Endothelial cell of umbilical vein (primary cell): ENCODE measurements at regions of chr10 and their contacts with region 1.

Region 1: DNA sequence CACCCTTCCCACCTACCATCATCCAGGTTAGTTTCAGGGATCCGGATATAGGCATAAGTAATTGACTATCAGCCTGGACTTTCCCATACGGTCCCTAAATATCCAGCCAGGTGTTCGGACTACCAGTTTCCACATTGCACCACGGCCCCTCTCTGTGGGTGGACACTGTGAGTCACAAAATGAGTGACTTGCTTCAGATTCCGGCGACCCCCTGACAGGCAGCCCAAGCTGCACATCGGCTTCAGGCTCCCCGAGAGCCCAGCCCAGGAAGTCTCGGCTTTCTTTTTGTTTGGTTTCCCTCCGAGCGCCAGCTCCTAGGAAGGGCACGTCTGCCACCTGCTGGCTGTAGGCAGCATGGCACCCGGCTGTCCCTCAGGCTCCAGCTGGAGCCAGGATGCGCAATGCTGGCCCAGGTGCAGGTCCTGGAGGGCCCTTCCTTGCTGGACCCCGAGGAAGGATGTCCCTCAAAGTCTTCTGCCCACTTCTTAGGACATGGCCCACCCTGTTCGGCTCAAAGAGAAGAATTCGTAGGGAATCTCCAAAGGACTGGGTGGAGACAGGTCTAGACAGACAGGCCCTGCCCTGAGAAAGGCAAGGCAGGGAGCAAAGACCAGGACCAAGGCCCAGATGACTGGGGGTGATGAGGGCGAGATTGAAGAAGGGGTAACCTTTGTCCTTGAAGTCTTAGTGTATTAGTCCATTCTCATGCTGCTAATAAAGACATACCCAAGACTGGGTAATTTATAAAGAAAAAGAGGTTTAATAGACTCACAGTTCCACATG is 10.6 kb downstream of the HABP2 start:
- DNase-seq: peak; percentile 68
- H3K4me3 ChIP-seq: peak overlapping the region in 2 of 3 experiments; percentile 41
- H3K27ac ChIP-seq: no peak overlapping the region
- H3K4me1 ChIP-seq: peaks cover 8% of the 10 kb centered on the region
- H3K27me3 ChIP-seq: no peaks in the 10 kb centered on the region
- CTCF ChIP-seq: peak; percentile 97 to 99
- POLR2A ChIP-seq: no peak

Region 2: DNA sequence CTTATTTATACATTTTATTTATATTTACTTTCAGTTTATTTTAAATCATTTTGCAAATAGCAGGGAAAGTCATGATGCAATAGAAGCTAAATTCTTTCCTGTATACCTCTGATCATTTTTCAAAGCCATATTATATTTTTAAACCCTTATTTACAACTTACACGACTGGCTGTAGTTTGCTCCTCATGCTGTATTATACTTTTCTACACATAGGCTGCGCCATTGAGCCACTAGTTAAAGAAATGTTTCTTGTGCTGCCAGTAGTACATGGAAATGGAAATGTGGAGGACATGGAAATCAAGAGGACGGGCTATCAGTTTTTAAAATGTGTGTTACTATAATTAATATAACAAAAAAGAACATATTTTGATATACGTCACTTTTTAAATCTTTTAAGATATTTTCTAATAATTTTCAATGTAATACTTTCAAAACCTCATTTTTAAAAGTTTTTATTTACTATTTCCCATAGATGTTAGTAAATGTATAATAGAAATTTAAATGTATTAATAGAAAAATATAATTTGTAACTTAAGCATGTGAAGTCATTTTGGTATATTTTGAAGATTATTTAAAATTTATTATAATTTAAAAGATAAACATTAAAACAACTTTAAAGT is 998.0 kb before region 1 on chr10:
- CTCF ChIA-PET with region 1: interaction called, 3 read pairs
- POLR2A ChIA-PET with region 1: no interaction called
- dilution Hi-C with region 1: no loop called
- intact Hi-C with region 1: loop called (anchors 5 kb)
- DNase-seq: peak; percentile 87
- H3K4me3 ChIP-seq: no peak overlapping the region
- H3K27ac ChIP-seq: no peak overlapping the region
- H3K4me1 ChIP-seq: no peaks in the 10 kb centered on the region
- H3K27me3 ChIP-seq: no peaks in the 10 kb centered on the region
- CTCF ChIP-seq: peak; percentile 53
- POLR2A ChIP-seq: no peak

Region 3: GRCh38 chr10:113108212-113108835 is 455.2 kb before region 1 on chr10:
- CTCF ChIA-PET with region 1: no interaction called
- POLR2A ChIA-PET with region 1: no interaction called
- dilution Hi-C with region 1: no loop called
- intact Hi-C with region 1: no loop called
- DNase-seq: no peak
- H3K4me3 ChIP-seq: no peak overlapping the region
- H3K27ac ChIP-seq: no peak overlapping the region
- H3K4me1 ChIP-seq: no peaks in the 10 kb centered on the region
- H3K27me3 ChIP-seq: no peaks in the 10 kb centered on the region
- CTCF ChIP-seq: peak; percentile 49 to 54
- POLR2A ChIP-seq: no peak

Region 4: DNA sequence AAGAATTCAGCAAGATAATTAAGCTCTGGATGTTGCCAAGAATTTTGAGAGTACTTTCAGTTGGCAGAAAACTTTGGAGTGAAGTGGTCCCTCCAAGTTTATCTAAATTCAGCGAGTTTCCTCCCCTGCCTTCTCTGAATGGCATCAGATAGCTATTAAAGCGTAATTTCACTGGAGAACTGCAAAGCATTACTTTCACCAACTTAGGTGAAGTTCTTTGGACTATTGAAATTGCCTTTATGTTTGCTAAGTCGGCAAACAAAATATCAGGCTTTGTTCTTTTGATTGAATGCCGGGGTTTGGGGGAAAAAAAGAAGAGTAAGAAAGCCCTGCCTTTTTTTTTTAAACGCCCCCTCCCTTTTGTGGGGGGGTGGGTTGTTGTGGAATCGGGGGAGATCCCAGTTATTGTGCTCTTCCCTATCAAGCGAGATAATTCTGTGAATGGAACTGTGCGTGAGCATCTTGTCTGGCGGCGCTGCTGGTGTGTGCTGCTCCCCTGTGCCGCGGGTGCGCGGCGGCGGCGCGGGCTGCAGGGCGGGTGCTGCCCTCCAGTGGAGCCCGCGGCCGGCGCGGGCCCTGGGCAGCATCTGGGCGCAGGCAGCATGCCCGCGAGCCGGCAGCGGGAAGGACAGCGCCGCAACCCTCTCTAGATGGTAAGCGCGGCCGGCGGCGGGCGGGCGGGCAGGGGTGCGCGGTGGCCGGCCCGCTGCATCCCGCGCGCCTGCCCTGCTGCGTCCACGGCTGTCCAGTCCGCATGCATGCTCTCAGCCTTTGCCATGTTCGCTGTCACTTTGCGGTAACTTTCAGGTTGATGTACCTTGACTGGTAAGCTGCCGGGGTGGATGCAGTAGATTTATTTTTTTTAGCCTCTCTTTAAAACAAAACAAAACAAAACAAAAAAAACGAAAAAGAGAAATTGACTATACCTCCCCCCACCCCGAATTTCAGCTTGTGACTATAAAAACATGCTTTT is 437.0 kb before region 1 on chr10:
- CTCF ChIA-PET with region 1: interaction called, 8 read pairs
- POLR2A ChIA-PET with region 1: no interaction called
- dilution Hi-C with region 1: no loop called
- intact Hi-C with region 1: loop called (anchors 1 kb)
- DNase-seq: peak; percentile 76
- H3K4me3 ChIP-seq: peak overlapping the region in 1 of 3 experiments; percentile 44
- H3K27ac ChIP-seq: no peak overlapping the region
- H3K4me1 ChIP-seq: peaks cover 4% of the 10 kb centered on the region
- H3K27me3 ChIP-seq: no peaks in the 10 kb centered on the region
- CTCF ChIP-seq: peak; percentile 56 to 77
- POLR2A ChIP-seq: no peak

Region 5: GRCh38 chr10:113454341-113455061 is 109.0 kb before region 1 on chr10:
- CTCF ChIA-PET with region 1: interaction called, 25 read pairs
- POLR2A ChIA-PET with region 1: no interaction called
- dilution Hi-C with region 1: no loop called
- intact Hi-C with region 1: loop called (anchors 1 kb)
- DNase-seq: peak; percentile 36
- H3K4me3 ChIP-seq: no peak overlapping the region
- H3K27ac ChIP-seq: no peak overlapping the region
- H3K4me1 ChIP-seq: no peaks in the 10 kb centered on the region
- H3K27me3 ChIP-seq: peaks cover 2 to 3% of the 10 kb centered on the region in 2 experiments
- CTCF ChIP-seq: peak; percentile 65 to 76
- POLR2A ChIP-seq: no peak

Region 6: DNA sequence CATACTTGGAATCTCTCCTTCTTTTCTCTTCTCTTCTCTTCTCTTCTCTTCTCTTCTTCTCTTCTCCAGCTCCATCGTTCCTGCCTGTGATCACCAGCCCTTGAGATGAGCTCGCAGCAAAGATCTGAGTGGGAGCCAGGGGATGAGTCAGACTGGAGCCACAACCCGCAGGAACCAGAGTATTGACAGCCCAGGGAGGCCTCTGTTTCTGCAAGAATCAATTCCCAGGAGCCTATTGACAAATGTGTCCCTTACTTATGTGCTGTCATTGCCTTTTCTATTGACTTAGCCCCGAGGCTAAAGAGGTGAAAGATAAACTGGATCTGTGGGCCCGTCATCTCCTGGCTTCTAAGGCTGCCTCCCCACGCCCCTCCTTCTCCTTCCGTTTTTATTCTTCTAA is 23.7 kb before region 1 on chr10:
- CTCF ChIA-PET with region 1: interaction called, 14 read pairs
- POLR2A ChIA-PET with region 1: no interaction called
- dilution Hi-C with region 1: no loop called
- intact Hi-C with region 1: no loop called
- DNase-seq: no peak
- H3K4me3 ChIP-seq: no peak overlapping the region
- H3K27ac ChIP-seq: no peak overlapping the region
- H3K4me1 ChIP-seq: no peaks in the 10 kb centered on the region
- H3K27me3 ChIP-seq: no peaks in the 10 kb centered on the region
- CTCF ChIP-seq: no peak
- POLR2A ChIP-seq: no peak

Region 7: GRCh38 chr10:113583571-113583970 is 20.1 kb after region 1 on chr10:
- CTCF ChIA-PET with region 1: no interaction called
- POLR2A ChIA-PET with region 1: no interaction called
- dilution Hi-C with region 1: no loop called
- intact Hi-C with region 1: no loop called
- DNase-seq: no peak
- H3K4me3 ChIP-seq: no peak overlapping the region
- H3K27ac ChIP-seq: no peak overlapping the region
- H3K4me1 ChIP-seq: no peaks in the 10 kb centered on the region
- H3K27me3 ChIP-seq: no peaks in the 10 kb centered on the region
- CTCF ChIP-seq: no peak
- POLR2A ChIP-seq: no peak

Region 8: DNA sequence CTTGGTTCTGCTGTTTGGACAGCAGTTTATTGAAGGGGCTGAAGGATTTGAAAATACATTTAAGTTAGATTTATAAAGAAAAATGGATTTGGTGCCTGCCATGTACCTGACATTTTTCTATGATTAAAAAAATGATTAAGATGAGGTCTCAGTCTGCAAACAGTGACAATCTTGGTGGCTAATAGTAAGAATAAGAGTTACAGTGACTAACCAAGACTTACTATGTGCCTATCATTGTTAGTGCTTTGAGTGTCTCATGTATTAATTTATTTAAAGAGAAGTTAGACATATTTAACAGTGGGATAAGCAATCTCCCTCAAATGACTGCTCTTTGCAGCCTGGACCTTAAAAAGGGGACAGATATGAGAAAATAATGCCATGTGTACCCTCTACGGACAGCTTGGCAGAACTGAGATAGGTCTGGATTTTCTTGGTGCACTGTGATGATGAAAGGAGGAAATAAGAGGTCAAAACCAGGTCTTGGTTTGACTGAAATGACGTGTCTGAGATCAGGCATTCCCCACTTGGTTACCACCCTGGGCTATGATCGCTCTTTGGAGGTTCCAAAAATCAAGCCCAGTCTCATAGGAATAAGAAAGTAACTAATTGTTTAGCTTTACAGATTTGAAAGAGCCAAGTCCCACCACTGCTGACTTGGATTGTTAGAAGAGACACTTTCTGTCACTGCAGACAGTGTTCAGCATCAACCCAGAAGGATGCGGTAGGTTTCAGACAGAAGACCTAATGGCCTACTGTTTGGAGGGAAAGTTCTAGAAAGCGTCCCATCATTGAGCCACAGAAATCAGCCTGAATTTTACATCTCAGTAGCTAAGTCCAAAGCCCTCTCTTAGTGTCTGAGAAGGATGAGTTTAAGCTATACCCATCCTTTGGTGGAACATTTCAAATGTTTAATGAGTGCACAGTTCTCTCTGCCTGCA is 118.3 kb after region 1 on chr10:
- CTCF ChIA-PET with region 1: no interaction called
- POLR2A ChIA-PET with region 1: no interaction called
- dilution Hi-C with region 1: no loop called
- intact Hi-C with region 1: no loop called
- DNase-seq: peak; percentile 16
- H3K4me3 ChIP-seq: no peak overlapping the region
- H3K27ac ChIP-seq: peak overlapping the region; percentile 70
- H3K4me1 ChIP-seq: peaks cover 11% of the 10 kb centered on the region
- H3K27me3 ChIP-seq: no peaks in the 10 kb centered on the region
- CTCF ChIP-seq: no peak
- POLR2A ChIP-seq: no peak